ENCODE measurements at regions of chr12 and their contacts with region 1.

Region 1: DNA sequence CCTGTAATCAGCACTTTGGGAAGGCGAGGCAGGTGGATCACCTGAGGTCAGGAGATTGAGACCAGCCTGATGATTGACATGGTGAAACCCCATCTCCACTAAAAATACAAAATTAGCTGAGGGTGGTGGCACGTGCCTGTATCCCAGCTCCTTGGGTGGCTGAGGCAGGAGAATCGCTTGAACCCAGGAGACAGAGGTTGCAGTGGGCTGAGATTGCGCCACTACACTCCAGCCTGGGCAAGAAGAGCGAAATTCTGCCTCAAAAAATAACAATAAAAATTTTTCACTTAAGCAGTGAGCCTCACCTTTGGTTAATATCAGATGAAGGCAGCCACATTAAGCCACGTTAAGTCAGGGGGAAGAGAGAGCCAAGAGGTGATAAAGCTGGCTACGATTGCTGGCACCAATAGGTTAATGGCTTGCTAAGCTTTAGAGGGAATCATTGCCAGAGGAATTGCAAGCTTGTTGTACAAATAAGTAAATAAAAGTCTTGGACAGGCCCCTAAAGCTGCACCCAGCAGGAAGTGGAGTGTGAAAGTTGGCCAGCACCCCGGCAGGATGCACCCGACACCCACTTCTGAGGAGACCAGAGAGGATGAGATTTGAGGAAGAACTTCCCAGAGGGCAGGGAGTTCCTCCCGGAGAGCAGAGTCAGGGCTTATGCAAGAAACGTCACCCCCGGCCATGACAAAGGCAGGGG is 41.3 kb upstream of the TESC start:
- DNase-seq: peak; percentile 53
- H3K4me3 Mint-ChIP-seq: no peak overlapping the region
- H3K27ac Mint-ChIP-seq: no peak overlapping the region
- H3K4me1 Mint-ChIP-seq: no peaks in the 10 kb centered on the region
- H3K27me3 Mint-ChIP-seq: no peaks in the 10 kb centered on the region
- CTCF ChIP-seq: no peak

Region 2: DNA sequence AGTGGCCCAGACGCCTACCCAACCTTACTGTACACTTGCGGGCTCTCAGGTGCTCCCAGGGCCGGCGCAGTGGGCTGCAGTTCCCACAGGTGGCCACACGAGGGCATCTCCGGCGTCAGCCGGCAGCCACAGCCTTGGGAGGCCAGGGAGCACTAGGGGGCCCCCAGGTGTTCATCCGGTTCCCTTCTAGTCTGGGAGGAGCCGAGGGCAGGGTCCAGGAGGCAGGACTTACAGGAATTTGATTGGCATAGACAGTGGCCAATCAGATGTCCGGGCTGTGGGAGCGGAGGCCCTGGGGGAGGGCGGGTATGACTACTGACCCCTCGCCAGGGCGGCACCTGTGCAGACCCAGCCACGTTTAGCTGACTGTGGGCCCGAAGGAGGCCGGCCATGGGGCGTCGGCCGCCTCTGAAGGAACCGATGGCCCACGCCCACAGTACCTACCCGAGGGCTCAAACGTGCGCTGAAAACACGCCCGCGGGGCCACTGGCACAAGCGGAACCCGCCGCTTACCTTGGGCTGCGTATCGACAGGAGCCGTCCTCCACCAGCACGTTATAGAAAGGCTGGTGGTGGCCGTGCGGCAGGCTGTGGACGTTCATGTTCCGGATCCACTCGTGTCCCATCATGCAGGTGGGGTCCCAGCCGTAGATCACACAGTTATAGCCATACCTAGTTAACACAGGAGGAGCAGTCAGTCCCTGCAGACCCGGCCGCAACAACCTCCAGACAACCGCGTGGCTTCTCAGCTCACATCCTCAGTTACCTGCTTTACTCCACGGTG is 14.9 kb after region 1 on chr12:
- CTCF ChIA-PET with region 1: interaction called, 10 read pairs
- POLR2A ChIA-PET with region 1: no interaction called
- intact Hi-C with region 1: no loop called
- DNase-seq: peak; percentile 87
- H3K4me3 Mint-ChIP-seq: no peak overlapping the region
- H3K27ac Mint-ChIP-seq: no peak overlapping the region
- H3K4me1 Mint-ChIP-seq: no peaks in the 10 kb centered on the region
- H3K27me3 Mint-ChIP-seq: no peaks in the 10 kb centered on the region
- CTCF ChIP-seq: peak; percentile 96